AG04450 (cell line): ENCODE measurements at regions of chr4 and their contacts with region 1.

Region 1: DNA sequence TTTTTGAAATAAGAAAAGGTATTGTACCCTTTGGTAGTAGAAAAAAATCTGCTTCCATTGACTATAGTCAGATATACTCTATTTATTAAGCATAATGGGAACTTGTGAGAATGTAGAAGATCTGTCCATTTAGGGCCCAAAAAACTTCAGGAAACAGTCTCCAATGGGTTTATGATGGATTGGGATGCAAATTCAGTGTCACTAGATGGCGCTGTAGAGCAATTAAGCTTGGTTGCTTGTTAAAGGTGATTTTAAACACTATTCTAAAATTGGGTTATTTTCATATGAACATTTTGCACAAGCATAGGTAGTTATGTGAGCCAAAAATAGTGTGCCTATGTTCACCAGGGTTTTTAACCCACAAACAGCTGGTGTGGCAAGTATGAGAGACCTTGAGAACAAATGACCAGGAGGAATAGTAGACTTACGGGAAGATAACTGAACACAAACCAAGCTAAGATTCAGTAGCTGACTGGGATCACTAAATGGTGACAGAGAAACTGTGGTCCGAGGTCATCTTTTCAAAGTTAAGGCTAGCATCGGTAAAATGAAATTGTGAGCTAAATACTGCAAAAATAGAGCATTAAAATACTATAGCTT is 80.3 kb upstream of the LSM6 start:
- DNase-seq: peak; percentile 21
- H3K4me3 ChIP-seq: no peak overlapping the region
- H3K27ac ChIP-seq: no peak overlapping the region
- H3K27me3 ChIP-seq: no peaks in the 10 kb centered on the region
- CTCF ChIP-seq: peak; percentile 76

Region 2: GRCh38 chr4:146051728-146052391 is 43.3 kb before region 1 on chr4:
- CTCF ChIA-PET with region 1: interaction called, 11 read pairs
- POLR2A ChIA-PET with region 1: no interaction called
- DNase-seq: peak; percentile 24
- H3K4me3 ChIP-seq: no peak overlapping the region
- H3K27ac ChIP-seq: no peak overlapping the region
- H3K27me3 ChIP-seq: no peaks in the 10 kb centered on the region
- CTCF ChIP-seq: no peak

Region 3: DNA sequence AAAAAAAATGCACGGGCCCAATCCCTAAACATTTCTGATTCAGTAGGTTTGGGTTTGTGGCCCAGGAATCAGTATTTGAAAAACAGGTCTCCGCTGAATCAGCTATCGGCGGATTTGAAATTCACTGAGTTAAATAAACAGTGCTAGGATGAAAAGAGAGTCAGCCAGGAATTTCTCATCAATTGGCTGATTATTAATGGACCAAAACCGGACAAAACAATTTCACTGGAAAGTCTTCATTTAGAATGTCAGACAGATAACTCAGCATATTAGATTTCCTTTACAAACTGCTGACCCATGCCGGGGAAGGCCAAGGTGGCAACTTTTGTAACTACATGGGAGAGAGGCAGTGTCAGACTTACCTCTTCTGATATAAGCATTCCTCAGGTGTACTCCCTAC is 19.1 kb before region 1 on chr4:
- CTCF ChIA-PET with region 1: interaction called, 12 read pairs
- POLR2A ChIA-PET with region 1: no interaction called
- DNase-seq: no peak
- H3K4me3 ChIP-seq: no peak overlapping the region
- H3K27ac ChIP-seq: no peak overlapping the region
- H3K27me3 ChIP-seq: no peaks in the 10 kb centered on the region
- CTCF ChIP-seq: no peak

Region 4: GRCh38 chr4:146105464-146105863 is 10.3 kb after region 1 on chr4:
- CTCF ChIA-PET with region 1: interaction called, 16 read pairs
- POLR2A ChIA-PET with region 1: no interaction called
- DNase-seq: no peak
- H3K4me3 ChIP-seq: no peak overlapping the region
- H3K27ac ChIP-seq: no peak overlapping the region
- H3K27me3 ChIP-seq: peaks cover 5% of the 10 kb centered on the region
- CTCF ChIP-seq: no peak

Region 5: GRCh38 chr4:146110871-146111485 is 15.8 kb after region 1 on chr4:
- CTCF ChIA-PET with region 1: interaction called, 16 read pairs
- POLR2A ChIA-PET with region 1: no interaction called
- DNase-seq: no peak
- H3K4me3 ChIP-seq: no peak overlapping the region
- H3K27ac ChIP-seq: no peak overlapping the region
- H3K27me3 ChIP-seq: peaks cover 3% of the 10 kb centered on the region
- CTCF ChIP-seq: no peak

Region 6: GRCh38 chr4:146916479-146917076 is 821.4 kb after region 1 on chr4:
- CTCF ChIA-PET with region 1: interaction called, 10 read pairs
- POLR2A ChIA-PET with region 1: no interaction called
- DNase-seq: peak; percentile 11
- H3K4me3 ChIP-seq: no peak overlapping the region
- H3K27ac ChIP-seq: no peak overlapping the region
- H3K27me3 ChIP-seq: no peaks in the 10 kb centered on the region
- CTCF ChIP-seq: peak; percentile 74